ENCODE measurements at regions of chr7 and their contacts with region 1.

Region 1: DNA sequence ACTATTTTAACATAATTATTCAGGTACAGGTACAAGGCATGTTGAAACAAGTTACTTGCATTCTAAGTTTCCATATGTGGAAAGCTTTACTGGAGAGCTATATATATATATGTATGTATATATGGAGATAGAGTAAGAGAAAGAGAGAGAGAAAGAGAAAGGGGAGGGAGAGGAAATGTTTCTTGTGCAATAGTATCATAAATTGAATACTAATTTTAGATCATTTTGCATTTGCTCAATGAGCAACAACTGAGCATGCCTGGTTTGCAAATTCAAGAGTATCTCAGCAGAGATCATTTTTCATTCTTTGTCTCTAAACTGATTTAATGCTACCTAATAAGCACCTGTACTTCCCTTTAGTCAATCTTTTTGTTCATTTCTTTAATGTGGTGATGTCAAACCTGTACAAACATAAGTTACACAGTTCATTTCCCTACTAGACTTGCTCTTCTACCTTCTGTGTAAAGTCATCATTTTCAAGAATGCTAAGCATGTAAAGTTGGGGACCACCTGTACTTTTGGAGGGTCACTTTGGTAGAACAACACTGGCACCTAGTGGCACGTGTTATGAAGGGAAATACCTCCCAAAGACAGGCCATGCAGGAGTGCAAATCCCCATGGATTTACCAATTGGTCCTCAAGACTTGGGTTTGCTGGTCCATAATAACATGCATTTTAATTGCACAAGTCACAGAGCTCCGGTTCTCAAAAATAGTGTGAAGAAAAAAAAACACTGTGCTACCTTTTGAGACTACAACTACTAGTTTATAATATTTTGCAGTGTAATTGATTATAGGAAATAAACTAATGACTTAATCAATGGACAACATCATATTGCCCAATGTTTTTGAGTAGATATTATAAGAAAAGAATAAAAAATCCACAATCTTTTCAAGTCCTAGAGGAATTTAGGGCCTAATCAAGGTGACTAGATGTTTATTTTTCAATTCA is 431.2 kb upstream of the IGFBP3 start:
- DNase-seq: peak; percentile 48 to 56
- H3K4me3 ChIP-seq: no peak overlapping the region
- H3K4me3 Mint-ChIP-seq: no peak overlapping the region
- H3K27ac Mint-ChIP-seq: no peak overlapping the region
- H3K4me1 ChIP-seq: no peaks in the 10 kb centered on the region
- H3K4me1 Mint-ChIP-seq: no peaks in the 10 kb centered on the region
- H3K27me3 ChIP-seq: no peaks in the 10 kb centered on the region
- H3K27me3 Mint-ChIP-seq: peaks cover 6% of the 10 kb centered on the region
- CTCF ChIP-seq: peak; percentile 68 to 73

Region 2: DNA sequence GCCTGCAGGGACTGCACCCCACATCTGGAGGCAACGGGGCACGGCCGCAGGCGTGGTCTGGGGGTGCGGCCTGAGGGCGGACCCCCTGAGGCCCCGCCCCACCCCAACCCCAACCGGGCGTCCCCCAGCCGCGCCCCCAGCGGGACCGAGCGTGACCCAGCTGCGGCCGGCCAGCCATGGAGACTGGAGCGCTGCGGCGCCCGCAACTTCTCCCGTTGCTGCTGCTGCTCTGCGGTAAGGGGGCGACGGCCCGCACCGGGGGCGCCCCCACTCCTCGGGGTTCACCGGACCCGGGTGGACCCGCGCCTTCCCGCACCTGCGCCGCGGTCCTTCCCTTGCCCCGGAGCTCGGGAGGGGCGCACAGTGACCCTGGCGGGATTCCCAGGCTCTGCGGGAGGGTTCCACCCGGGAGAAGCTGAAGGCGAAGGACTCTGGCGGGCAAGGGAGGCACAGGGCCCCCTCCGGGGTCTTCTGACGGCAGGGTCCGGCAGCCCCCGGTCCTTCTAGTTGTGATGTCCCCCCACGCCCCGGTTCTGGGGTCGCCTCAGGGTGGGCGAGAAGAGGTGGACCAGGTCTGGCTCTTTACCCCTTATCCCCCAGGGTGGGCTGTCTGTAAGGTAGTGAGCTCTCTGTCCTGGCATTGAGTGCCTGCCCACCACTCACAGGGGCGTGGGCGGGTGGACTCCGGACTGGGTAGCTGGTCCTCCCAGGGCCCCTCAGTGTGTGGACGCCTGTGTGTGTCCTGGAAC is 1194.5 kb before region 1 on chr7 and contains the start of gene RAMP3:
- CTCF ChIA-PET with region 1: no interaction called
- POLR2A ChIA-PET with region 1: no interaction called
- intact Hi-C with region 1: loop called (anchors 5 kb)
- DNase-seq: no peak
- H3K4me3 ChIP-seq: no peak within 1 kb of the TSS
- H3K4me3 Mint-ChIP-seq: no peak within 1 kb of the TSS
- H3K27ac Mint-ChIP-seq: no peak within 1 kb of the TSS
- H3K4me1 ChIP-seq: no peaks in the 10 kb centered on the region
- H3K4me1 Mint-ChIP-seq: no peaks in the 10 kb centered on the region
- H3K27me3 ChIP-seq: no peaks in the 10 kb centered on the region
- H3K27me3 Mint-ChIP-seq: peaks cover 17% of the 10 kb centered on the region
- CTCF ChIP-seq: no peak
- total RNA-seq, gene RAMP3: not detected in 2 replicates

Region 3: DNA sequence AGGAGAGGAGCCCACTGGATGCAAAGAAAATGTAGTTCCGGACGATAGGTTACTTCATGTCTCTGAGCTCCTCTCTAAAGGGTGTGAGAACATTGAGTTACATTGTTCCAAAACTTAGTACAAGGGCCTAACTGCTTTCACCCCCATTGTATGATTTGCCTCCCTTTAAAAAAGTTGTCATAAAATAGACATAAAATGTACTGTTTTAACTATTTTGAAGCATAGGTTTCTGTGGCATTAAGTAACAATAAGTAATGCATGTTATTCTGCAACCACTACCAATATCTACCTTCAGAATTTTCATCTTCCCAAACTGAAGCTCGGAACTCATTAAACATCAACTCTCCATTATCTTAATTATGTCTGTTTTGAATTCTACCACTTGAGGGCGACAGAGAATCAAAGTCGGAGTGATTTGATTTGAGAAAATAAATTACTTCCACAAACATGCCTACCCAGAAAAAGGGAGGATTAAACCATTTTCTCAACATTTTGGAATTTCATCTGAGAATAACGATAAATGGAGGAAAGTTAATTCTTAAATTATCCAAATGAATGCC is 461.3 kb before region 1 on chr7:
- CTCF ChIA-PET with region 1: no interaction called
- POLR2A ChIA-PET with region 1: no interaction called
- intact Hi-C with region 1: loop called (anchors 1 kb)
- DNase-seq: peak in 1 of 2 experiments; percentile 43
- H3K4me3 ChIP-seq: no peak overlapping the region
- H3K4me3 Mint-ChIP-seq: no peak overlapping the region
- H3K27ac Mint-ChIP-seq: no peak overlapping the region
- H3K4me1 ChIP-seq: no peaks in the 10 kb centered on the region
- H3K4me1 Mint-ChIP-seq: no peaks in the 10 kb centered on the region
- H3K27me3 ChIP-seq: no peaks in the 10 kb centered on the region
- H3K27me3 Mint-ChIP-seq: peaks cover 30% of the 10 kb centered on the region
- CTCF ChIP-seq: peak; percentile 40 to 53

Region 4: DNA sequence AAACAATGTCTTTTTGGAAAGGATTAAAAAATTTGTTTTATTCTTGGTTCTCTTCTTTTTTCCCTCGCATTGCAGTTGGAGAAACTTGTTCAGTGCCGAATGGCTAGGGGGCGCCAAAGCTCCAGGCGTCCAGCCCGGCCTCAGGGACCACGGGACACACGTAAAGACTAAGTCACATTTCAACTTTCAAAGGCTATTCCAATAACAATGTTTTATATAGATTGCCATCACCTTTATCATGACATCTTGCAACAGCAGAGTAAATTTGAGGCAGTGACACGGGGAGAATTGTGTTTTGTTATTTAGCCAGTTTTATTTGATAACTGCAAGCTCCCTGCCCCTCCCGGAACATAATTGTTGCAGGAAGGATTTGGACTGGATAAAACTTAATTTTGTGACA is 429.0 kb before region 1 on chr7:
- CTCF ChIA-PET with region 1: no interaction called
- POLR2A ChIA-PET with region 1: no interaction called
- intact Hi-C with region 1: loop called (anchors 1 kb)
- DNase-seq: peak in 1 of 2 experiments; percentile 77
- H3K4me3 ChIP-seq: no peak overlapping the region
- H3K4me3 Mint-ChIP-seq: no peak overlapping the region
- H3K27ac Mint-ChIP-seq: no peak overlapping the region
- H3K4me1 ChIP-seq: no peaks in the 10 kb centered on the region
- H3K4me1 Mint-ChIP-seq: no peaks in the 10 kb centered on the region
- H3K27me3 ChIP-seq: no peaks in the 10 kb centered on the region; the same call in none of the 2 replicates
- H3K27me3 Mint-ChIP-seq: peaks cover 17% of the 10 kb centered on the region
- CTCF ChIP-seq: peak; percentile 79 to 92

Region 5: GRCh38 chr7:46139079-46139478 is 213.2 kb before region 1 on chr7:
- CTCF ChIA-PET with region 1: no interaction called
- POLR2A ChIA-PET with region 1: no interaction called
- intact Hi-C with region 1: no loop called
- DNase-seq: no peak
- H3K4me3 ChIP-seq: no peak overlapping the region
- H3K4me3 Mint-ChIP-seq: no peak overlapping the region
- H3K27ac Mint-ChIP-seq: no peak overlapping the region
- H3K4me1 ChIP-seq: peaks cover 2% of the 10 kb centered on the region
- H3K4me1 Mint-ChIP-seq: peaks cover 5% of the 10 kb centered on the region
- H3K27me3 ChIP-seq: no peaks in the 10 kb centered on the region
- H3K27me3 Mint-ChIP-seq: peaks cover 3% of the 10 kb centered on the region
- CTCF ChIP-seq: no peak

Region 6: GRCh38 chr7:46444266-46444665 is 92.0 kb after region 1 on chr7:
- CTCF ChIA-PET with region 1: no interaction called
- POLR2A ChIA-PET with region 1: no interaction called
- intact Hi-C with region 1: no loop called
- DNase-seq: no peak
- H3K4me3 ChIP-seq: no peak overlapping the region
- H3K4me3 Mint-ChIP-seq: no peak overlapping the region
- H3K27ac Mint-ChIP-seq: no peak overlapping the region
- H3K4me1 ChIP-seq: no peaks in the 10 kb centered on the region
- H3K4me1 Mint-ChIP-seq: no peaks in the 10 kb centered on the region
- H3K27me3 ChIP-seq: no peaks in the 10 kb centered on the region
- H3K27me3 Mint-ChIP-seq: peaks cover 2% of the 10 kb centered on the region
- CTCF ChIP-seq: no peak

Region 7: GRCh38 chr7:47179812-47180515 is 827.7 kb after region 1 on chr7:
- CTCF ChIA-PET with region 1: no interaction called
- POLR2A ChIA-PET with region 1: no interaction called
- intact Hi-C with region 1: loop called (anchors 5 kb)
- DNase-seq: peak in 1 of 2 experiments; percentile 63
- H3K4me3 ChIP-seq: no peak overlapping the region
- H3K4me3 Mint-ChIP-seq: no peak overlapping the region
- H3K27ac Mint-ChIP-seq: no peak overlapping the region
- H3K4me1 ChIP-seq: no peaks in the 10 kb centered on the region
- H3K4me1 Mint-ChIP-seq: no peaks in the 10 kb centered on the region
- H3K27me3 ChIP-seq: no peaks in the 10 kb centered on the region
- H3K27me3 Mint-ChIP-seq: no peaks in the 10 kb centered on the region
- CTCF ChIP-seq: peak; percentile 77 to 88

Measured in Caco-2 (cell line).